Activated naive CD4-positive, alpha-beta T cell treated with anti-CD3 and anti-CD28 coated beads for 36 hours (primary cell): ENCODE measurements at regions of chr12 and their contacts with region 1.

Region 1: GRCh38 chr12:96294831-96295230 is 100.7 kb downstream of the ELK3 start:
- DNase-seq: no peak
- H3K4me3 Mint-ChIP-seq: no peak overlapping the region
- H3K27ac Mint-ChIP-seq: no peak overlapping the region
- H3K4me1 Mint-ChIP-seq: peaks cover 26% of the 10 kb centered on the region
- H3K27me3 Mint-ChIP-seq: no peaks in the 10 kb centered on the region

Region 2: GRCh38 chr12:96094201-96094600 is 200.6 kb before region 1 on chr12:
- CTCF ChIA-PET with region 1: no interaction called
- intact Hi-C with region 1: no loop called
- DNase-seq: no peak
- H3K4me3 Mint-ChIP-seq: no peak overlapping the region
- H3K27ac Mint-ChIP-seq: no peak overlapping the region
- H3K4me1 Mint-ChIP-seq: peaks cover 21% of the 10 kb centered on the region
- H3K27me3 Mint-ChIP-seq: no peaks in the 10 kb centered on the region

Region 3: DNA sequence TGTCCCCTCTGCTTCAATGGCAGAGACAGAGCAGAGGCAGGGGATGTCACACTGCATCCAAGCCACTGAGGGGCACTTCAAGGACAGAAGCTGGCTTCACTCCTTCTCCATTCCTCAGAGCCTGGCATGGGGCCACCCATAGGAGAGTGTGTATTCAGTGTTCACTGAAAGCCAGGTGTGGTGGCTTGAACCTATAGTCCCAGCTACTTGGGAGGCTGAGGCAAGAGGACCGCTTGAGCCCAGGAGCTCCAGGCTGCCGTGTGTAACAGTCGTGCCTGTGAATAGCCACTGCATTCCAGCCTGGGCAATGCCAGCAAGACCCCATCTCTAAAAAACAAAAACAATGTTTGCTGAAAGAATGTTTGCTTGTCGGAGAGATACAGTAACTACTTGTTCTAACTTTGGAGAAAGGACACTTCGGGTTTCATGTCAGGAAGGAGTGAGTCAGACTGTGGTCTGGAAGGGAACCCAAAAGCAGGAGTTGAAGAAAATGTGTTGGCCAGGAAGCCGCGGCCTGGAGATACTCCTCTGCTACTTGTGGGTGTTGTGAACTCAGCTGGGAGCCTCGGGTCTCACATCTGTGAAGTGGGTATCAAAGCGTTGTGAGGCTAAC is 57.3 kb before region 1 on chr12:
- CTCF ChIA-PET with region 1: no interaction called
- intact Hi-C with region 1: loop called (anchors 1 kb)
- DNase-seq: peak; percentile 75
- H3K4me3 Mint-ChIP-seq: no peak overlapping the region
- H3K27ac Mint-ChIP-seq: peak overlapping the region; percentile 47
- H3K4me1 Mint-ChIP-seq: peaks cover 66% of the 10 kb centered on the region
- H3K27me3 Mint-ChIP-seq: no peaks in the 10 kb centered on the region

Region 4: DNA sequence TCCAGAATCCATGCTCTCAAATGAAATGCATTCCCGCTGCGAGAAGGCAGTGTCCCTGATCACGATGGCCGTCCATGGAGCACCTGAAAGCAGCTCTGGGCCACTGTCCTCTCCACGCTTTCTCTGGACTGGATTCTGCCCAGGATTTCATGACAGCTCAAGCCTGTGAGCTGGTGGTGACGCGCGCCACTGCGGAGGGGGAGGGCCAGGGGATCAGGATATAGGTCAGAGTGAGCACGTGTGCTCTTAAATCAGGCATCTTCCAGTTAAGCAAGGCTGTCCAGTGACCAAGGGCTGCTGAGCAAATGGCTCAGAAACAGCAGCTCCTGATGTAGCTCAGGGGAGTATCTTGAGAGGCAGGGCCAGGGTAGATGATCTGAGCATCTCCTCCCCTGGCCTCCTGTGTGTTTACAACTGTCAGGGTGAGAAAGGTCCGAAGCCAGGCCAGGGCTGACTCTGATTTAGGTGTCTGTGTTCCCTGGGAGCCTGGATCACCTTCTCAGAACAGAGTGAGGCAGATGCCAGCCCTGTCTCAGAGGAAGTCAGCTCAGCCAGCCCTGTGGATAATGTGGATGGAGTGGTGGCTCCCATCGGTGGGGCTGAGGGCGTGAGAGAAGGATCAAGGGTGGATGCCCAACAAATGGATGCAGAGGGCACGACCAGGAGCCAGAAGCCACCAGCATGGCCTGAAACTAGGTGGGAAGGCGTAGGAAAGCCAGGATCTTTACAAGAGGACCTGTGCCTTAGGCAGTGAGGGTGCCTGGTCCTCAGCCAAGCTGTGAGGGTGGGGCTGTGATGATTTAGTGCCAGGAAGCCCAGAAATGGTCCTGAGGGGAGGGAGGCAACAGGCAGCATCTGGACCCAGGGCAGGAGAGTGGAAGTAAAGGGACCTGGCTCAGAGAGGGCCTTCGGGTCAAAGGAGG is 45.4 kb before region 1 on chr12:
- CTCF ChIA-PET with region 1: no interaction called
- intact Hi-C with region 1: no loop called
- DNase-seq: no peak
- H3K4me3 Mint-ChIP-seq: no peak overlapping the region
- H3K27ac Mint-ChIP-seq: peak overlapping the region; percentile 33
- H3K4me1 Mint-ChIP-seq: peaks cover 39% of the 10 kb centered on the region
- H3K27me3 Mint-ChIP-seq: no peaks in the 10 kb centered on the region